A673 (cell line): ENCODE measurements at regions of chr3 and their contacts with region 1.

Region 1: DNA sequence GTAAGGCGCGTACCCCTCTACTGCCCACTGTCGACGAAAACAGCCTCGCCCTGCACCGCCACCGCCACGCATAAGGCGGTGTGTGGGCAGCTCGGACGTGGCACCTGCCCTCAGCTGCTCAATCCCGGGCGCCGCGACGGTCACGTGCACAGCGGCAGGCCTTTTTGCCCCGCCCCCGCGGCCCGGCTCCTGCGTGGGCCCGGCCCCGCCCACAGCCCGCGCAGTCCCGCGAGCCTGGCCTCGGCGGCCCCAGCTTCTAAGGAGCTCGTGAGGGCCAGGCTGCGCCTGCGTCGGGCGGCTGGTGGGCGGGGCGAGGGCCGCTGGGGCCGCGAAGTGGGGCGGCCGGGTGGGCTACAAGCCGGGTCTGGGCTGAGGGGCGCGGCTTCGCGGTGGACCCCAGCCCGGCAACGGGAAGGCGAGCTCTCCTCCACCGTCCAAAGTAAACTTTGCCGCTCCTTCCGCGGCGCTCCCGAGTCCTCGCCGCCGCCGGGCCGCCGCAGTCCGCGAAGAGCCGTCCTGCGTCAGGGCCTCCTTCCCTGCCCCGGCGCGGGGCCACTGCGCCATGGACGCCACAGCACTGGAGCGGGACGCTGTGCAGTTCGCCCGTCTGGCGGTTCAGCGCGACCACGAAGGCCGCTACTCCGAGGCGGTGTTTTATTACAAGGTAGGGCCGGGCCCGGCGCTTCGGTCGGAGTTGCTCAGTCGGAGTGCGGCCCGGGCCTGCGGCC is at the start of gene CAPN7:
- DNase-seq: peak; percentile 97
- H3K4me3 ChIP-seq: peak within 1 kb of the TSS; percentile 97
- H3K27ac ChIP-seq: peak within 1 kb of the TSS; percentile 95
- H3K4me1 ChIP-seq: peaks cover 8% of the 10 kb centered on the region
- H3K27me3 ChIP-seq: no peaks in the 10 kb centered on the region
- CTCF ChIP-seq: peak; percentile 42; the same call in 1 of the 2 replicates
- total RNA-seq, gene CAPN7: 38.6 and 40.7 TPM in 2 replicates

Region 2: DNA sequence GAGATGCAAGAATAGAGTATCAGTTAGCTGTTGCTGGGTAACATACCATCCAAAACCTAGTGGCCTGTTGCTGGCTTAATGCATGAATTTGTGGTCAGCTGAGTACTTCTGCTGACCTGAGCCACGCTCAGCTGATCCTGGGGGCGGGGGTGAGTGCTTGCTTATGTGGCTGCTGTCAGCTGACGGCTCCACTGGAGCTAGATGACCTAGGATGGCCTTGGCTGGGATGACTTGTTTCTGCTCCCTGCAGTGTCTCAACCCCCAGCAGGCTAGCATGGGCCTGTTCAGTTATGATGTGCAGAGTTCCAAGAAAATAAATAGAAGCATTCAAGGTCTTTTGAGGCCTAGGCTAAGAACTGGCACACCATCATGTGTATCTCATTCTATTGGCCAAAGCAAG is 1593.3 kb before region 1 on chr3:
- CTCF ChIA-PET with region 1: no interaction called
- POLR2A ChIA-PET with region 1: no interaction called
- intact Hi-C with region 1: no loop called
- DNase-seq: no peak
- H3K4me3 ChIP-seq: no peak overlapping the region
- H3K27ac ChIP-seq: no peak overlapping the region
- H3K4me1 ChIP-seq: no peaks in the 10 kb centered on the region
- H3K27me3 ChIP-seq: no peaks in the 10 kb centered on the region
- CTCF ChIP-seq: no peak

Region 3: GRCh38 chr3:15148614-15149013 is 57.5 kb before region 1 on chr3:
- CTCF ChIA-PET with region 1: no interaction called
- POLR2A ChIA-PET with region 1: no interaction called
- intact Hi-C with region 1: loop called (anchors 10 kb)
- DNase-seq: no peak
- H3K4me3 ChIP-seq: no peak overlapping the region
- H3K27ac ChIP-seq: no peak overlapping the region
- H3K4me1 ChIP-seq: no peaks in the 10 kb centered on the region
- H3K27me3 ChIP-seq: peaks cover 63% of the 10 kb centered on the region
- CTCF ChIP-seq: no peak

Region 4: GRCh38 chr3:15405448-15406050 is 199.5 kb after region 1 on chr3:
- CTCF ChIA-PET with region 1: interaction called, 12 read pairs
- POLR2A ChIA-PET with region 1: no interaction called
- intact Hi-C with region 1: loop called (anchors 1 kb)
- DNase-seq: peak; percentile 73
- H3K4me3 ChIP-seq: no peak overlapping the region
- H3K27ac ChIP-seq: no peak overlapping the region
- H3K4me1 ChIP-seq: no peaks in the 10 kb centered on the region
- H3K27me3 ChIP-seq: no peaks in the 10 kb centered on the region
- CTCF ChIP-seq: peak; percentile 75

Region 5: DNA sequence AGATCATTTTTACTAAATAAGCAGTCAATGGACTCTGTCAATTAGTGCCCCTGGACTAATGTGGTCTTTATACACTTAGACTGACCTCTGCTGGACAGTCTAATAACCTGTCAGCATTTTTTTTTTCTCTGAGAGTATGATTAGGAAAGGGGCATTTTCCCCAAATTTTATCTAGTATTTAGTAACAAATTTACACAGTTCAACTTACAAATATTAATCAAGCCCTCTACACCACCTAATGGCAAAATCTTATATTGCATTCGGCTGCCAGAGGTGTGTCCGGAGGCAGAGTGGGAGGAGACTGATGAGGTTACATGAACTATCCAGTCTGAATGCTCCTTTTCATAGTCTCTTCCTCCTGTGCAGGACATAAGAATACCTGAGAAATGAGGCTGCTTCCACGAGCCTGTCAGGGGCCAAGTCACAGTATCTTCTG is 351.4 kb after region 1 on chr3:
- CTCF ChIA-PET with region 1: no interaction called
- POLR2A ChIA-PET with region 1: no interaction called
- intact Hi-C with region 1: loop called (anchors 5 kb)
- DNase-seq: peak; percentile 80
- H3K4me3 ChIP-seq: no peak overlapping the region
- H3K27ac ChIP-seq: no peak overlapping the region
- H3K4me1 ChIP-seq: no peaks in the 10 kb centered on the region
- H3K27me3 ChIP-seq: no peaks in the 10 kb centered on the region
- CTCF ChIP-seq: peak; percentile 69

Region 6: DNA sequence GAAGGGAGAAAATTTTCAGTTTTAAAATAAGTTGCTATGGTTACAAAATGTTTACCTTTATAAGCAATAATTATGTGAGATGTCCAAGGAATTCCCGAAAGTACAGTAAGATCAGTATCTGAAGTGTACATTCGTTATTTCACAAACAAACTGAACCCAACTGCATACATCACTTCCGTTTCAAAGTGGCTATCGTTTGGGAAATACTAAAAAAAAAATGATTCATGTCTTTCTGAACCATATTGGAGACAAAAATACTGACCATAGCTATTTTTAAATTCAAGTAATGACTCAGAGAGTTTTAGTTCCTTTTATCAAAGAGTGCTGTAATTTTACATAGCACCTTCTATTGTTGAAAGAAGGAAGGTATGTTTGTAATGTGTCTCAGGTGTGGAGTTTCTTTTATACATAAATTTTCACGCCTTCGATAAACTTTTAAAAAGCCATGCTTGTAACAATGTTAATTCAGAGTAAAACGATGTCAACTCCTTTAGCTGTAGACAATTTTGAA is 599.7 kb after region 1 on chr3:
- CTCF ChIA-PET with region 1: no interaction called
- POLR2A ChIA-PET with region 1: no interaction called
- intact Hi-C with region 1: loop called (anchors 5 kb)
- DNase-seq: no peak
- H3K4me3 ChIP-seq: no peak overlapping the region
- H3K27ac ChIP-seq: no peak overlapping the region
- H3K4me1 ChIP-seq: no peaks in the 10 kb centered on the region
- H3K27me3 ChIP-seq: no peaks in the 10 kb centered on the region
- CTCF ChIP-seq: no peak

Region 7: GRCh38 chr3:16177962-16178627 is 972.0 kb after region 1 on chr3:
- CTCF ChIA-PET with region 1: no interaction called
- POLR2A ChIA-PET with region 1: no interaction called
- intact Hi-C with region 1: loop called (anchors 5 kb)
- DNase-seq: peak; percentile 78
- H3K4me3 ChIP-seq: no peak overlapping the region
- H3K27ac ChIP-seq: no peak overlapping the region
- H3K4me1 ChIP-seq: no peaks in the 10 kb centered on the region
- H3K27me3 ChIP-seq: peaks cover 35% of the 10 kb centered on the region
- CTCF ChIP-seq: peak; percentile 96

Region 8: GRCh38 chr3:16247276-16248061 is 1041.4 kb after region 1 on chr3:
- CTCF ChIA-PET with region 1: no interaction called
- POLR2A ChIA-PET with region 1: no interaction called
- intact Hi-C with region 1: loop called (anchors 2 kb)
- DNase-seq: peak; percentile 85
- H3K4me3 ChIP-seq: no peak overlapping the region
- H3K27ac ChIP-seq: no peak overlapping the region
- H3K4me1 ChIP-seq: no peaks in the 10 kb centered on the region
- H3K27me3 ChIP-seq: no peaks in the 10 kb centered on the region
- CTCF ChIP-seq: peak; percentile 97